Mammary epithelial cell (primary cell): ENCODE measurements at regions of chr12 and their contacts with region 1.

Region 1: DNA sequence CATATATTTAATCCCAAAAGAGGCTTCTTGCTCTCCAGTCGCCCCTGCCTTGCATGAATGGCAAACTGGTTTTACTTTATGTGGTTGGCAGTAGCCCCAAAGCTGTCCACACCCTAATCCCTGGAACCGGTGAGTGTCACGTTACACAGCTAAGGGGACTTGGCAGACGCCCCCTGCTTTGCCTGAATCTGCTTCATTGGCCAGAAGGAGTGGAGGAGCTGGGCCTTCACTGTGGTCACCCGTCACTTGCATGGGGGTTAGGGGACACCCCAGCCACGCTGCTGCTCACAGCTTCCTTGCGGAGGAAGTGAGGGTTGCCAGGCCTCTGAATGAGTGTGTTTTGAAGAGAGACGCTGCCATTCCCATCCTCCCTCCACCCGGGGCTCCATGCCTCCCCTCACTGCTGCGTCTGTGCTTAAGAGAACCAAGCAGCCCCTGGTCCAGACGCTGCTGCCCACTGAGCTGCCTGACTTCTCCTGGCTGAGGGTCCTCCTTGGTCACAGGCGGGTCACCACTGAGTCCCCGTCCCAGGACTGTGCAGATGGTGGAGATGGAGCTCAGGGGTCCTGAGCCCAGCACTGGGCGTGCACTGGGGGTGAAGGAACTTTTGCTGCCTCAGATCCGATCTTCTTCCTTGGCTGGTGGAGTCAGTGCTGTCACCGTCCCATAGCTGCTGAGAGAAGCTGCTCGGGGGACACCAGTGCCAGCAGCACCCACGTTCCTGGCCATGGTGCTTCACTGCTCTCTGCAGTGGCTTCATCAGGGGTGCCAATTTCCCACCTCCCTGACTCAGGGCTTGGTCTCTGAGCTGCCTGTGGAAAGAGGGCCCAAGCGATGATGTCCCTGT is 39.8 kb downstream of the GALNT9 start:
- DNase-seq: no peak
- H3K4me3 ChIP-seq: no peak overlapping the region
- H3K27ac ChIP-seq: no peak overlapping the region
- H3K4me1 ChIP-seq: peaks cover 10% of the 10 kb centered on the region
- H3K27me3 ChIP-seq: no peaks in the 10 kb centered on the region
- CTCF ChIP-seq: no peak

Region 2: DNA sequence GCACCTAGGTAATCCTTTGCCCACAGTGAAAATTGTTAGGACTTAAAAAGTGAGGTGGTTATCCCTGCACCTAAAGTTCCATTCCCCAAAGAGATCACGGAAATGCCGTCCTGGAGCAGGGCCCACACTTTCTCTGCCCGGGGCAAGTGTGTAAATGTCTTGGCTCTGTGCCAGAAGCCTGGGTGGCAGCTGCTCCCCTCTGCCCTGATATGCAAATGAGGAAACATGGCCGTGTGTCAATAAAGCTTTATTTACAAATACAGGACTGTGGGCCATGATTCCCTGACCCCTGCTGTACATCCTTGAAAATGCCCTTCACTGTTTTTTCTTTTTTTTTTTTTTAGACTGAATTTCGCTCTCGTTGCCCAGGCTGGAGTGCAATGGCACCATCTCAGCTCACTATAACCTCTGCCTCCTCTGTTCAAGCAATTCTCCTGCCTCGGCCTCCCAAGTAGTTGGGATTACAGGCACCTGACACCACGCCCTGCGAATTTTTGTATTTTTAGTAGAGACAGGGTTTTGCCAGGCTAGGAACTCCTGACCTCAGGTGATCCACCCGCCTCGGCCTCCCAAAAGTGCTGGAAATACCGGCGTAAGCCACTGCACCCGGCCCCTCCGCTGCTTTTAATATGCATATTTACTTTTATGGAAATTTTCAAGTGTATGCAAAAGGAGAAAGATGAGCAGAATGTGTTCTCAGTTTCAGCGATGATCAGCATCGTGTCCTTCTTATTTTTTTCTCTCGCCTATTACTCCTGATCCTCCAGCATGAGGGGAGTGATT is 35.7 kb before region 1 on chr12:
- CTCF ChIA-PET with region 1: no interaction called
- dilution Hi-C with region 1: loop called (anchors 5 kb)
- in situ Hi-C with region 1: no loop called
- intact Hi-C with region 1: no loop called
- DNase-seq: no peak
- H3K4me3 ChIP-seq: no peak overlapping the region
- H3K27ac ChIP-seq: no peak overlapping the region
- H3K4me1 ChIP-seq: no peaks in the 10 kb centered on the region
- H3K27me3 ChIP-seq: peaks cover 2% of the 10 kb centered on the region
- CTCF ChIP-seq: no peak

Region 3: DNA sequence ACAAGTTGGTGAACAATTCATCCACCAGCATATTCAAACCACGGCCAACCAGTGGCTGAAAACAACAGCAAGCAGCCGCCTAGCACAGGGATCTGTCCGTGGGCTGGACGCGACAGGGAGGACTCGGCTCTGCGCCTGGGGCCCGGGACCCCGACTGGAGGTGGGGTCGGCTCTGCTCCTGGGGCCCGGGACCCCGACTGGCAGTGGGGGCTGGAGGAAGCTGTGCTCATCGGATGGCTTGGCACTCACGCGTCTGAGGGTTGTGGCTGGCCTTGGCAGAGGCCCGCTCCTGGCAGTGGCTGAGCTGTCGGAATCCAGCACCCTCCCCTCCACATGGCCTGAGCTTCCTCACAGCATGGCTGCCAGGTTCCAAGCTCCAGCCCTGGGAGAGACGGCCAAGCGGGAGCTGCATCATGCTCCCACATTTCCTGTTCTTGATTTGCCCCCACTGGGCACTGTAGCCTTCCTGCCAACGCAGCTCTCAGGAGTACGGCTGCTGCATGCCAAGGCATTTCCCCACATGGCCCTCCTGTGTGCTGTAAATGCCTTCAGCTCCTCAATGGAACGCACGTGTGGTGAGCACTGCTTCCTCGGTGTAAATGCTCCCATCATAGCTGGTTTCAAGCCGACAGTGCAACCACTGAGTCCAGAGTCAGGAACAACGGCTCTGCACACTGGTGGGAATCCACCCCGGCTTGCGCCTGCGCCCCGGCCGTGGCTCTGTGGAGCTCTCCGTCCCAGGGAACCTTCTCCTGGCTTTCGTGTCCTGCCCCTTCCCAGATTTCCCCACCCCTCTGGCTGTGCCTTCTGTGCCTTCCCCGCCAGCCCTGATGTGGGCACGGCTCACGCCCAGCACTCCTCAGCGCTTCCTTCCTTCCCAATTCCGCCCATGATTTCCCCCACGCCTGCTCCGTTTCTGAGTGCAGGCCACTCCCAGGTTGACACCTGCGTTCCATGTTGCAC is 47.2 kb after region 1 on chr12:
- CTCF ChIA-PET with region 1: no interaction called
- dilution Hi-C with region 1: no loop called
- in situ Hi-C with region 1: no loop called
- intact Hi-C with region 1: no loop called
- DNase-seq: no peak
- H3K4me3 ChIP-seq: no peak overlapping the region
- H3K27ac ChIP-seq: no peak overlapping the region
- H3K4me1 ChIP-seq: no peaks in the 10 kb centered on the region
- H3K27me3 ChIP-seq: no peaks in the 10 kb centered on the region
- CTCF ChIP-seq: no peak

Region 4: GRCh38 chr12:132717531-132718387 is 428.2 kb after region 1 on chr12:
- CTCF ChIA-PET with region 1: no interaction called
- dilution Hi-C with region 1: no loop called
- in situ Hi-C with region 1: no loop called
- intact Hi-C with region 1: no loop called
- DNase-seq: no peak
- H3K4me3 ChIP-seq: no peak overlapping the region
- H3K27ac ChIP-seq: no peak overlapping the region
- H3K4me1 ChIP-seq: peaks cover 9% of the 10 kb centered on the region
- H3K27me3 ChIP-seq: no peaks in the 10 kb centered on the region
- CTCF ChIP-seq: no peak